Natural killer cell (primary cell): ENCODE measurements at regions of chr12 and their contacts with region 1.

Region 1: DNA sequence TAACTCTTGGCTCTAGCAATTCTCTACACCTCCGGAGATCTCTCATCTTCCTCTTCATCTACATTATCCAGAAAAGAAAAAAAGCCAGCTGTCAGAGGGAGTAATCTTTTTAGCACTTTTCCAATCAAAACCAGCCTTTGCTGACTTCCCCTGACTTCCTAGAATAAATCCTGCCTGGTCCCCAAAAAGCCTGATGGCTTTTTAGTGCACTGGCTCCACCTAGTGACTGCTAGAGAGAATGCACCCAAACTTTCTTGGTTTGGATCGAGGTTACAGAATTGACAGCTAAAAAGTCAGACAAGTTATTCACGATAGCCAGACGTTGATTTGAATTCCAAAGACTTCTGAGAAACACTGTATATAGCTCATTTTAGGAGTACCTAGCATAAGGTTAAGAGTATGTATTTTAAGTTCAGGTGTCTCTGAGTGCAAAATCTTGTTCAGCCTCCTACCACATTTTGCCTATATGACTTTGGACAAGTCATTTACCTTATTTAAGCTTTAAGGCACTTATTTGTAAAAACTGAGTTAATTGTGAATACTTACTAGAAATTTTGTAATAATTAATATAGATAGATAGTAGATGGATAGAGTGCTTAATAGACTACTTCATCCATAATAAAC is 185.7 kb upstream of the GRIN2B start:
- DNase-seq: peak in 1 of 2 donors; percentile 63
- ATAC-seq: peak; percentile 46 to 69 (median 67)
- H3K4me3 ChIP-seq: no peak overlapping the region
- H3K4me3 Mint-ChIP-seq: no peak overlapping the region
- H3K27ac ChIP-seq: no peak overlapping the region
- H3K27ac Mint-ChIP-seq: no peak overlapping the region
- H3K4me1 ChIP-seq: no peaks in the 10 kb centered on the region
- H3K4me1 Mint-ChIP-seq: peaks cover 0 to 5% of the 10 kb centered on the region in 2 donors
- H3K27me3 ChIP-seq: no peaks in the 10 kb centered on the region
- H3K27me3 Mint-ChIP-seq: peaks cover 0 to 5% of the 10 kb centered on the region in 2 donors
- CTCF ChIP-seq: peak; percentile 97

Region 2: DNA sequence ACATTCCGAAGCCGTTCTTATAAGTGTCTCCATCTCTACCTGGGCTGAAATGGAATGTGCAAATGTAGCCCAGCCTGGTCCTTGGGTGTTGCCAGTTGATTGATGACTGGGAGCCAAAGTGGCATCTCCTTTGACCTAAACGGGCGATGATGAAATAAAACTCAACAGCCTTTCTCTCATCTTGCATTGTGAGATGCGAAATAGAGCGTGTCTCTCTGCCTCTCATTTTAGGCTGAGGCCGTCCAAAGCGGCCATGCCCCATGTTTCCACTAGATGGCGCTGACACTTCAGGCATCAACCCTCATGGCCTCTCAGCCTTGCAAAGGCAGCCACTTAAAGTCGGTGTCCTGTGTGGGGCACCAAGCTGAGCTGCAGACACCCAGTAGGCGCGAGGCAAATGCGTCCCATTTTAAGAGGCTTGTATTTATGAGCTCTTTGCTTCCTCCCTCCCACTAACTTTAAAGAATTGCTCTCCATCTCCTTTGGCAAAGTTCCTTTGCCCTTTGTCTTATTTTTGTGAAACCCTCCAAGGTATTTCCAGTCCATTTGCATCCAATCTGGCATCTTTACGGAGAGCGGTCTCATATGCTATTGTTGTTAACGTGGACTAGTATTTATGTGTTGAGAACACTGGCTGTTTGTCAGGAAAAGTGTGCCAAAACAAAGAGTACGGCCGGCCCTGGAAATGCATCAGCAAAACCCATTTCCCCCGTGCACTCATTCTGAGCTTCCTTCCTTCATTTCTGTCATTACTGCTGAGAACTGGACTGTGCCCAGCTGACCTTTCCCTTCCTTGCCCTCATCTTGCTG is 1250.8 kb before region 1 on chr12:
- intact Hi-C with region 1: loop called (anchors 2 kb)
- DNase-seq: peak; percentile 76 to 90
- ATAC-seq: peak; percentile 95 to 100 (median 99)
- H3K4me3 ChIP-seq: no peak overlapping the region
- H3K4me3 Mint-ChIP-seq: peak overlapping the region; percentile 3
- H3K27ac ChIP-seq: no peak overlapping the region
- H3K27ac Mint-ChIP-seq: no peak overlapping the region
- H3K4me1 ChIP-seq: peaks cover 5% of the 10 kb centered on the region
- H3K4me1 Mint-ChIP-seq: peaks cover 7 to 10% of the 10 kb centered on the region in 2 donors
- H3K27me3 ChIP-seq: no peaks in the 10 kb centered on the region
- H3K27me3 Mint-ChIP-seq: peaks cover 15 to 26% of the 10 kb centered on the region in 2 donors
- CTCF ChIP-seq: peak; percentile 95

Region 3: GRCh38 chr12:13362260-13362841 is 804.8 kb before region 1 on chr12:
- intact Hi-C with region 1: loop called (anchors 5 kb)
- DNase-seq: peak in 1 of 2 donors; percentile 47
- ATAC-seq: peak; percentile 53 to 78 (median 58)
- H3K4me3 ChIP-seq: no peak overlapping the region
- H3K4me3 Mint-ChIP-seq: no peak overlapping the region
- H3K27ac ChIP-seq: no peak overlapping the region
- H3K27ac Mint-ChIP-seq: no peak overlapping the region
- H3K4me1 ChIP-seq: no peaks in the 10 kb centered on the region
- H3K4me1 Mint-ChIP-seq: peaks cover 0 to 5% of the 10 kb centered on the region in 2 donors
- H3K27me3 ChIP-seq: peaks cover 2% of the 10 kb centered on the region
- H3K27me3 Mint-ChIP-seq: peaks cover 13 to 40% of the 10 kb centered on the region in 2 donors
- CTCF ChIP-seq: peak; percentile 63

Region 4: GRCh38 chr12:13864081-13864673 is 302.9 kb before region 1 on chr12:
- intact Hi-C with region 1: loop called (anchors 5 kb)
- DNase-seq: peak; percentile 18 to 60
- ATAC-seq: peak in 2 of 3 donors; percentile 54 to 66
- H3K4me3 ChIP-seq: no peak overlapping the region
- H3K4me3 Mint-ChIP-seq: no peak overlapping the region
- H3K27ac ChIP-seq: no peak overlapping the region
- H3K27ac Mint-ChIP-seq: no peak overlapping the region
- H3K4me1 ChIP-seq: no peaks in the 10 kb centered on the region
- H3K4me1 Mint-ChIP-seq: no peaks in the 10 kb centered on the region
- H3K27me3 ChIP-seq: no peaks in the 10 kb centered on the region
- H3K27me3 Mint-ChIP-seq: peaks cover 4 to 10% of the 10 kb centered on the region in 2 donors
- CTCF ChIP-seq: peak; percentile 75

Region 5: DNA sequence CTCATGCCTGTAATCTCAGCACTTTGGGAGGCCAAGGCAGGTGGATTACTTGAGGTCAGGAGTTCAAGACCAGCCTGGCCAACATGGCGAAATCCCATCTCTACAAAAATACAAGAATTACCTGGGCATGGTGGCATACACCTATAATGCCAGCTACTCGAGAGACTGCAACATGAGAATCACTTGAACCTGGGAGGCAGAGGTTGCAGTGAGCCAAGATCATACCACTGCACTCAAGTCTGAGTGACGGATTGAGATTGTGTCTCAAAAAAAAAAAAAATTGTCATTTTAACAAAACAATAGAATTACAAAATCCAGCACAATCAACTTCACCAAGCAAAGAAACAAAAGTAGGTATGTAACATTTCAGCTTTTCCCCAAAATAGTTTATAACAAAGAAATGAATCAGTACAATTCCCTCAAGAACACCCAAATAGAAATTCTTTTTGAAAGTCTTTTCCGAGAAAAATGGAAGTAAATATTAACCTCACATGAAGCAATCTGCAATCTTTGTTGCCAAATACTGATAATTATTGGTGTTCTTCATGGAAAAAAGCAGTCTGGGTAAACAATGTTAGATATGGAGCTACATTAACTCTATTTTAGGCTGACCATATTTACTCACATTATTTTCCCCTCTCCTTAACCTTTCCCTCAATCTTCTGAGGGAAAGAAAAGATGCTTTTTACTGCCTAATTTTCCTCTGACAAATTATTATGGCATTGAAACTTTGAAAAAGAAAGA is 32.5 kb after region 1 on chr12:
- intact Hi-C with region 1: no loop called
- DNase-seq: no peak
- ATAC-seq: no peak
- H3K4me3 ChIP-seq: no peak overlapping the region
- H3K4me3 Mint-ChIP-seq: no peak overlapping the region
- H3K27ac ChIP-seq: no peak overlapping the region
- H3K27ac Mint-ChIP-seq: no peak overlapping the region
- H3K4me1 ChIP-seq: no peaks in the 10 kb centered on the region
- H3K4me1 Mint-ChIP-seq: no peaks in the 10 kb centered on the region
- H3K27me3 ChIP-seq: peaks cover 3% of the 10 kb centered on the region
- H3K27me3 Mint-ChIP-seq: no peaks in the 10 kb centered on the region
- CTCF ChIP-seq: no peak